IMR-90 (cell line): ENCODE measurements at regions of chr14 and their contacts with region 1.

Region 1: DNA sequence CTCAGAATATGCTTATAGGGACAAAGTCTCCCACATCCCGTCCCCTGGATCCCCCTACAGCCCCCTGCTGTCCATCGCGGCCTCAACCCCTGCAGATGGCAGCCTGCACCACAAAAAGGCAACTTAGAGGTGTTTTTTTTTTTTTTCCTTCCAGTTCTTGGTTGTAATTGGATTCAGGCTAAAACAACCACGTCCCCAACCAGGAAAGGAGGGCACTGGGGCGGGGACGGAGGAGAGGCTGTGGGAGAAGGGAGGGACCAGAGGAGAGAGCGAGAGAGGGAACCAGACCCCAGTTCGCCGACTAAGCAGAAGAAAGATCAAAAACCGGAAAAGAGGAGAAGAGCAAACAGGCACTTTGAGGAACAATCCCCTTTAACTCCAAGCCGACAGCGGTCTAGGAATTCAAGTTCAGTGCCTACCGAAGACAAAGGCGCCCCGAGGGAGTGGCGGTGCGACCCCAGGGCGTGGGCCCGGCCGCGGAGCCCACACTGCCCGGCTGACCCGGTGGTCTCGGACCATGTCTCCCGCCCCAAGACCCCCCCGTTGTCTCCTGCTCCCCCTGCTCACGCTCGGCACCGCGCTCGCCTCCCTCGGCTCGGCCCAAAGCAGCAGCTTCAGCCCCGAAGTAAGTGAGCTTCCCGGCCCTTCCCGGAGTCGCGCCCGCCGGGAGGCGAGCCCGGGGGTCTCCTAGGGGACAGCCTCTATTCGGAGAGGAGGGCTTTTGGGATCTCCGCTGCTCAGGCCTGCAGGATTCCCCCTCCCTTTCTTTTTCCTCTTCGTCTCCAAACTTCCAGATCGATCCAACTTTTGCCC is at the start of gene MMP14:
- DNase-seq: peak; percentile 89
- ATAC-seq: peak; percentile 77
- H3K4me3 ChIP-seq: peak within 1 kb of the TSS; percentile 64
- H3K27ac ChIP-seq: peak within 1 kb of the TSS; percentile 96
- H3K4me1 ChIP-seq: peaks cover 13% of the 10 kb centered on the region
- H3K27me3 ChIP-seq: no peaks in the 10 kb centered on the region
- CTCF ChIP-seq: peak; percentile 68
- POLR2A ChIP-seq: peak; percentile 88
- RAD21 ChIP-seq: peak; percentile 61
- total RNA-seq, gene MMP14: 124 and 156 TPM in 2 replicates

Region 2: DNA sequence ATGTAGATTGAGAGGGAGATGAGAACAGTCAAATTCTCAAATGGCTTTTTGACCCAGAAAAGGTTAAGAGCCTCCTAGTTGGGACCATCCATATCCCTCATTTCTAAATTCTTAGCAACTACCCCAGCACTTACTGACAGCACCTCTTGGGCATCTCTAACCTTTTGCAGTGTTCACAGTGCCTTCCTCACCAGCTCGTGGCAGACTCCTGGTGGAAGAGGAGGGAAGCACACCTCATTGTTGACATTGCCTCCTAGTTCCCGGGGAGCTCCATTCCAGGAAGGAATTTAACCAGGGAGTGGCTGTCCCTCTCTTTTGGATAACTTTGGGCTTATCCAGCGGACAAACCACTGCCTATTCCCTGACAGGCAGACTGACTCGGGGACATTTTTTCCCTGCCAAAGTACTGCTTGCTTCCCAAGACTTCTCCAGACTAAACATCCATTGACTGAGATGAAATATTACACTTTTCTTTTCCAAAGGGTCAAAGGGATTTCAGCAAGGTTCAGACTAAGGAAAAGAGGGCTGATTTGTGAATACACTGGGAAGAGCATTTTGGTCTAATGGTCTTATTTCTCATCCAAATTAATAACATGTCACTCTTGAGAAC is 183.4 kb before region 1 on chr14:
- CTCF ChIA-PET with region 1: no interaction called
- POLR2A ChIA-PET with region 1: no interaction called
- dilution Hi-C with region 1: no loop called
- in situ Hi-C with region 1: no loop called
- intact Hi-C with region 1: loop called (anchors 5 kb)
- DNase-seq: peak; percentile 74
- ATAC-seq: peak; percentile 97
- H3K4me3 ChIP-seq: no peak overlapping the region
- H3K27ac ChIP-seq: no peak overlapping the region
- H3K4me1 ChIP-seq: no peaks in the 10 kb centered on the region
- H3K27me3 ChIP-seq: 0 out of 2 replicates have a peak, but pooled peaks cover 1% of the 10 kb centered on the region
- CTCF ChIP-seq: peak; percentile 95
- POLR2A ChIP-seq: 0 out of 2 replicates have a peak, but pooled peaks have one; percentile 23
- RAD21 ChIP-seq: peak; percentile 93

Region 3: GRCh38 chr14:22781586-22781991 is 54.9 kb before region 1 on chr14:
- CTCF ChIA-PET with region 1: no interaction called
- POLR2A ChIA-PET with region 1: no interaction called
- dilution Hi-C with region 1: no loop called
- in situ Hi-C with region 1: no loop called
- intact Hi-C with region 1: loop called (anchors 5 kb)
- DNase-seq: peak; percentile 43
- ATAC-seq: peak; percentile 70
- H3K4me3 ChIP-seq: no peak overlapping the region
- H3K27ac ChIP-seq: no peak overlapping the region
- H3K4me1 ChIP-seq: peaks cover 12% of the 10 kb centered on the region
- H3K27me3 ChIP-seq: no peaks in the 10 kb centered on the region
- CTCF ChIP-seq: no peak
- POLR2A ChIP-seq: no peak
- RAD21 ChIP-seq: no peak

Region 4: GRCh38 chr14:22900081-22900799 is 63.7 kb after region 1 on chr14:
- CTCF ChIA-PET with region 1: interaction called, 7 read pairs
- POLR2A ChIA-PET with region 1: no interaction called
- dilution Hi-C with region 1: no loop called
- in situ Hi-C with region 1: no loop called
- intact Hi-C with region 1: loop called (anchors 5 kb)
- DNase-seq: peak; percentile 78
- ATAC-seq: peak; percentile 81
- H3K4me3 ChIP-seq: no peak overlapping the region
- H3K27ac ChIP-seq: no peak overlapping the region
- H3K4me1 ChIP-seq: peaks cover 17% of the 10 kb centered on the region
- H3K27me3 ChIP-seq: no peaks in the 10 kb centered on the region
- CTCF ChIP-seq: peak; percentile 74
- POLR2A ChIP-seq: no peak
- RAD21 ChIP-seq: peak; percentile 71

Region 5: GRCh38 chr14:22918804-22919600 is 82.5 kb after region 1 on chr14 and contains the start of gene RBM23:
- CTCF ChIA-PET with region 1: no interaction called
- POLR2A ChIA-PET with region 1: no interaction called
- dilution Hi-C with region 1: no loop called
- in situ Hi-C with region 1: no loop called
- intact Hi-C with region 1: loop called (anchors 5 kb)
- DNase-seq: peak; percentile 100
- ATAC-seq: peak; percentile 97
- H3K4me3 ChIP-seq: peak within 1 kb of the TSS; percentile 57
- H3K27ac ChIP-seq: peak within 1 kb of the TSS; percentile 82
- H3K4me1 ChIP-seq: peaks cover 9% of the 10 kb centered on the region
- H3K27me3 ChIP-seq: no peaks in the 10 kb centered on the region
- CTCF ChIP-seq: no peak
- POLR2A ChIP-seq: peak; percentile 88
- RAD21 ChIP-seq: no peak
- total RNA-seq, gene RBM23: 375 and 830 TPM in 2 replicates